Activated B cell treated with CpG ODN at 0.5 μM for 24 hours (primary cell): ENCODE measurements at regions of chr2 and their contacts with region 1.

Region 1: GRCh38 chr2:120252225-120253021 is at the start of gene RALB:
- DNase-seq: peak; percentile 98
- ATAC-seq: peak; percentile 94
- H3K4me3 Mint-ChIP-seq: peak within 1 kb of the TSS; percentile 99
- H3K27ac Mint-ChIP-seq: peak within 1 kb of the TSS; percentile 94
- H3K4me1 Mint-ChIP-seq: peaks cover 63% of the 10 kb centered on the region
- H3K27me3 Mint-ChIP-seq: peaks cover 3% of the 10 kb centered on the region
- CTCF ChIP-seq: no peak
- total RNA-seq, gene RALB: 29.9 and 33.4 TPM in 2 replicates

Region 2: GRCh38 chr2:119338826-119339561 is 913.4 kb before region 1 on chr2:
- CTCF ChIA-PET with region 1: no interaction called
- POLR2A ChIA-PET with region 1: no interaction called
- intact Hi-C with region 1: no loop called
- DNase-seq: no peak
- ATAC-seq: peak; percentile 97
- H3K4me3 Mint-ChIP-seq: peak overlapping the region; percentile 29
- H3K27ac Mint-ChIP-seq: peak overlapping the region; percentile 85
- H3K4me1 Mint-ChIP-seq: peaks cover 31% of the 10 kb centered on the region
- H3K27me3 Mint-ChIP-seq: no peaks in the 10 kb centered on the region
- CTCF ChIP-seq: no peak

Region 3: DNA sequence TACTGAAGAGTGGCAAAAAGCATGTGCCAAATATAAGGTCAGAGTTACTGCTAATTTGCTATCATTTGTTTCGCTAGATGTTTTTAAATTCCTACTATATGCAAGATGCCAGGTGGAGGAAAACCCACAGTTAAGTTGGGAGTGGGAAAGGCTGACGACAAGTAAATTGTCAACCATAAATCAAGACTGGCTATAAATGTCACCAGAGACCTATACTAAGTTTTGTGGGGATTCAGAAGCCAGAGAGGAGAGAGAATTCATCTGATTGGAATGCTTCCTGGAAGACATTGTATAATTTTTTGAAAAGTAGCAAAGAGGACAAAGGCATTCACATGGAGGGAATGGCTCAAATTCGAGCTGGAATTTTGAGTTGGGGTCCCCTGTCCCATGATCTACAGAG is 643.9 kb before region 1 on chr2:
- CTCF ChIA-PET with region 1: no interaction called
- POLR2A ChIA-PET with region 1: no interaction called
- intact Hi-C with region 1: no loop called
- DNase-seq: no peak
- ATAC-seq: no peak
- H3K4me3 Mint-ChIP-seq: no peak overlapping the region
- H3K27ac Mint-ChIP-seq: no peak overlapping the region
- H3K4me1 Mint-ChIP-seq: no peaks in the 10 kb centered on the region
- H3K27me3 Mint-ChIP-seq: peaks cover 8% of the 10 kb centered on the region
- CTCF ChIP-seq: no peak

Region 4: GRCh38 chr2:119678998-119679710 is 573.3 kb before region 1 on chr2 and contains the start of gene TMEM177:
- CTCF ChIA-PET with region 1: no interaction called
- POLR2A ChIA-PET with region 1: interaction called, 4 read pairs
- intact Hi-C with region 1: loop called (anchors 1 kb)
- DNase-seq: peak; percentile 90
- ATAC-seq: peak; percentile 96
- H3K4me3 Mint-ChIP-seq: peak within 1 kb of the TSS; percentile 90
- H3K27ac Mint-ChIP-seq: peak within 1 kb of the TSS; percentile 68
- H3K4me1 Mint-ChIP-seq: peaks cover 23% of the 10 kb centered on the region
- H3K27me3 Mint-ChIP-seq: no peaks in the 10 kb centered on the region
- CTCF ChIP-seq: no peak
- total RNA-seq, gene TMEM177: 9.0 and 10.3 TPM in 2 replicates

Region 5: DNA sequence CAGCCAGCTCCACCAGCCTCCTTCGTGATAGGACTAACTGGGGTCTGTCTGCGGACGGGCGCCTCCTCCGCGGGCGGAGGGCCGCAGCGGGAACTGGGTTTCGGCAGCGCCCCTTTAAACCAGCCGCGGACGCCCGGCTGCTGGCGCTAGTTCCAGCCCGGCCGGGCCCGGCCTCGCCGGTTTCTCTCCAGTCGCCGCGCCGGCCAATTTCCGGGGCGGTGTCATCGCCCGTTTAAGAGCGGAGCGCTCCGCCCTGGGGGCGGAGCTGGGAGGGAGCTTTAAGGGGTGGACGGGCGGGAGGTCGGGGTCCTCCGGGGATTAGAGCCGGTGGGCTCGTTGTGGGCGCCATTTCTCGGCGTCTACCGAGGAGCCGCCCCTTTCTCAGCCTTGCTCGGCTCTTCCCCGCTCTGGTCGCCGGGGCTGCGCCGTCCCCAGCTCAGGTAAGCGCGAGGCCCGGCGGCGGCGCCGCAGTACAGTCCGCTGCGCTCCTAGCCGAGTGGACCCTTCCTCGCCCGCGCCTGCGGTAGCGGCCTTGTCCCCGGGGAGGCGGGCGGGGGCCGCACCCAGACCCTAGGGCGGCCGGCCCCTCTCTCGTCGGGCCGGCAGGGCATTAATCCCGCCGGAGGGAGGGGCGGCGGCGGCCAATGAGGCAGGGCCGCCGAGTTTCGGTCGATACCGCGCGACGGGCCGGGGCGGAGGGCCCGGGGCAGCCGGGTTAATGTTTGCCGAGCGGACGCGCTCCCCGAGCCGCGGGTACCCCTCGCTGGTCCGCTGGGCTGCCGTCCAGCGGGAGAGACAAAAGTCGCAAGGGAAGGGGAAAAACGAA is 239.4 kb before region 1 on chr2 and contains the start of gene EPB41L5:
- CTCF ChIA-PET with region 1: no interaction called
- POLR2A ChIA-PET with region 1: interaction called, 6 read pairs
- intact Hi-C with region 1: loop called (anchors 1 kb)
- DNase-seq: peak; percentile 77
- ATAC-seq: peak; percentile 87
- H3K4me3 Mint-ChIP-seq: peak within 1 kb of the TSS; percentile 87
- H3K27ac Mint-ChIP-seq: peak within 1 kb of the TSS; percentile 79
- H3K4me1 Mint-ChIP-seq: peaks cover 32% of the 10 kb centered on the region
- H3K27me3 Mint-ChIP-seq: no peaks in the 10 kb centered on the region
- CTCF ChIP-seq: no peak
- total RNA-seq, gene EPB41L5: 20.9 and 29.4 TPM in 2 replicates

Region 6: GRCh38 chr2:120206022-120206581 is 46.3 kb before region 1 on chr2:
- CTCF ChIA-PET with region 1: no interaction called
- POLR2A ChIA-PET with region 1: no interaction called
- intact Hi-C with region 1: no loop called
- DNase-seq: no peak
- ATAC-seq: peak; percentile 52
- H3K4me3 Mint-ChIP-seq: no peak overlapping the region
- H3K27ac Mint-ChIP-seq: no peak overlapping the region
- H3K4me1 Mint-ChIP-seq: peaks cover 10% of the 10 kb centered on the region
- H3K27me3 Mint-ChIP-seq: no peaks in the 10 kb centered on the region
- CTCF ChIP-seq: no peak

Region 7: DNA sequence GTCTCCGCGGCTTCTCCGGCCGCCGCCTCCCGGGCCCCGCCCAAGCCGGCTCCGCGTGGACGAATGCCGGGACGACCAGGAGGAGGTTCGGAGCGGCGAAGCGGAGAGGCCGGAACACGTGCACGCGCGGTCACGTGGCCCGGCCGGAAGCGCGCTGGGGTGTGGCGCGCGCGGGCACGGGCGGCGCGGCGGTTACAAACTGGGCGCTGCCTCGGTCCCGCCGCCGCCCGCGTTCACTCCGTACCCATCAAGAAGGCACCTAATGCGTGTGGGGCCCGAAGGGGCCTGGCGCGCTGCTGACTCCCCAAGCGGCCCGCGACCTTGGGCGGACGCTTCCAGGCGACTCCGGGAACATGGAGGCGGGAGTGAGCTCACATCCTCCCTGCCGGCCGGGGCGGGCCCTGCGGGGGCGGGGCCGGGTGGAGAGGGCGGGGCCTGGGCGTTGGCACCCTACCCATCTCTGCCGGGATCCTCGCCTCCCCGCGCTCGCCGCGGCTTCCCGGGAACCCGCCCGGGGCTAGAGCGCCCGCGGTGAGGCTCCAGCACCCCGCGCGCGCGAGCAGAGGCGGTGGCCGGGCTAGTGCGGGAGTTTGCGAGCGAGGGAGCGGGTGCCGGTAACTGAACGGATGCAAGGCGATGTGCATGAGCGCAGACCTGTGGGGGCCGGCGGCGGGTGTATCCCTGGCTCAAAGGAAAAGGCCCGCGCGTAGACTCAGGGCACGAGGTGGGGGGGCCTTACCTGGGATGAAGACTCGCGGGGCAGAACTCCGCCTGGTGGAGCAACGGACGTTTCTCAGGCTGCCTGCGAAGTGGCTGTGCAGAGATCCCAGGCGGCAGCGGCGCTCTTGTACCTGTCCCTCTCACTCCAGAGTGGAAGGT is 29.1 kb before region 1 on chr2 and contains the start of gene TMEM185B:
- CTCF ChIA-PET with region 1: interaction called, 5 read pairs
- POLR2A ChIA-PET with region 1: interaction called, 37 read pairs
- intact Hi-C with region 1: loop called (anchors 1 kb)
- DNase-seq: peak; percentile 97
- ATAC-seq: peak; percentile 96
- H3K4me3 Mint-ChIP-seq: peak within 1 kb of the TSS; percentile 87
- H3K27ac Mint-ChIP-seq: peak within 1 kb of the TSS; percentile 90
- H3K4me1 Mint-ChIP-seq: peaks cover 56% of the 10 kb centered on the region
- H3K27me3 Mint-ChIP-seq: no peaks in the 10 kb centered on the region
- CTCF ChIP-seq: no peak
- total RNA-seq, gene TMEM185B: 25.6 and 26.8 TPM in 2 replicates

Region 8: GRCh38 chr2:120231974-120232635 is 20.3 kb before region 1 on chr2:
- CTCF ChIA-PET with region 1: interaction called, 3 read pairs
- POLR2A ChIA-PET with region 1: interaction called, 36 read pairs
- intact Hi-C with region 1: loop called (anchors 1 kb)
- DNase-seq: peak; percentile 31
- ATAC-seq: peak; percentile 90
- H3K4me3 Mint-ChIP-seq: peak overlapping the region; percentile 89
- H3K27ac Mint-ChIP-seq: peak overlapping the region; percentile 90
- H3K4me1 Mint-ChIP-seq: peaks cover 43% of the 10 kb centered on the region
- H3K27me3 Mint-ChIP-seq: no peaks in the 10 kb centered on the region
- CTCF ChIP-seq: no peak

Region 9: DNA sequence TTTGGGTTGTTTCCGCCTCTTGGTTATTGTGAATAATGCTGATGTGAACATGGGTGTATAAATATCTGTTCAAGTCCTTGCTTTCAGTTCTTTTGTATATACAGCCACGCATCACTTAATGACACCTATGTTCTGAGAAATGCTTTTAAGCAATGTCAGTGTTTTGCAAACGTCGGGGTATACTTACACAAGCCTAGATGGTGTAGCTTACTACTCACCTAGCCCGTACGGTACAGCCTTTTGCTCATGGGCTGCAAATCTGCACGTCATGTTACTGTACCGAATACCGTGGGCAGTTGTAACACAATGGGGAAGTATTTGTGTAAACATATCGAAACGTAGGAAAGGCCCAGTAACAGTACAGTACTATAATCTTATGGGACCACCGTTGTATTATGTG is 12.6 kb after region 1 on chr2:
- CTCF ChIA-PET with region 1: no interaction called
- POLR2A ChIA-PET with region 1: interaction called, 6 read pairs
- intact Hi-C with region 1: loop called (anchors 1 kb)
- DNase-seq: no peak
- ATAC-seq: no peak
- H3K4me3 Mint-ChIP-seq: peak overlapping the region; percentile 48
- H3K27ac Mint-ChIP-seq: no peak overlapping the region
- H3K4me1 Mint-ChIP-seq: peaks cover 49% of the 10 kb centered on the region
- H3K27me3 Mint-ChIP-seq: no peaks in the 10 kb centered on the region
- CTCF ChIP-seq: no peak

Region 10: GRCh38 chr2:120287183-120288015 is 35.0 kb after region 1 on chr2:
- CTCF ChIA-PET with region 1: no interaction called
- POLR2A ChIA-PET with region 1: interaction called, 7 read pairs
- intact Hi-C with region 1: loop called (anchors 1 kb)
- DNase-seq: no peak
- ATAC-seq: peak; percentile 95
- H3K4me3 Mint-ChIP-seq: peak overlapping the region; percentile 53
- H3K27ac Mint-ChIP-seq: peak overlapping the region; percentile 89
- H3K4me1 Mint-ChIP-seq: peaks cover 19% of the 10 kb centered on the region
- H3K27me3 Mint-ChIP-seq: no peaks in the 10 kb centered on the region
- CTCF ChIP-seq: no peak